MCF 10A (cell line): ENCODE measurements at regions of chr15 and their contacts with region 1.

Region 1: GRCh38 chr15:58770857-58771620 is at the start of gene MINDY2:
- DNase-seq: peak; percentile 98
- H3K4me3 Mint-ChIP-seq: no peak within 1 kb of the TSS
- H3K27ac Mint-ChIP-seq: peak within 1 kb of the TSS; percentile 97
- H3K4me1 Mint-ChIP-seq: peaks cover 11% of the 10 kb centered on the region
- H3K27me3 Mint-ChIP-seq: no peaks in the 10 kb centered on the region
- CTCF ChIP-seq: peak; percentile 28
- total RNA-seq, gene MINDY2: 18.8 and 21.9 TPM in 2 replicates

Region 2: DNA sequence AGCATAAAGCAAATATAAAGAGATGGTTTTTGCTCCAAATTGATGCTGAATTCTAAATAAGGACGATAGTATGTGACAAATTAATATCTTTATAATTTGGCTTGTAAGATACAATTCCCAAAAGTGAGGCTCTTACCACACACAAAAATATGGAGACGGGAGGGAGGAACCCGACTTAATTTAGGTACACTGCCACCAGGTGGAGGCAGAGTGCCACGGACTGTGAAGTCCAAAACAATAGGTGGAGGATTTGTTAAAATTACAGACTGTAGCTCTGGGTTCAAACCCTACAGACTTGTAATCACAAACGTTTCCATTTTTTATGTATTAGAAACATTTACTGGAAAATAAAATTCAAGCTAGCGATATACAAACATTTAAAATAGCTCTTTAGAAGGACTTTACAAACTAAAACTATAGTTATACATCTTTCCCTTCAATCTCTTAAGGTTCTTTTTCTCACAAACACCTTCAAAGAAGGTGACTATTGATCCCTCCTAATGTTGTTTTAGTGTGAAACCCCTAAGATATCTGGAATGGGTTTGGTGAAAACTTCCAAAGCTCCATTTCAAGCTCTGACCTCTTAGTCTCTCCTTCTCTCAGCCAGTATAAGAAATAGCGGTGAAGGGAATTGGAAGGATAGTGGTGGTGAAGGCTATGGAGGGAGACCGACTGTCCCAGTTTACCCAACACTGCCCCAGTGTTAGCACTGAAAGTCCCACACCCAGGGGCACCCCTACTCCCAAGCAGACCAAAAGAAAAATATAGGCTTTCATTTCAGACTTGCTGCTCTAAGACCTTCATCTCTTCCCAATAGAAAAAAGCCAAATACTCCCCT is 543.1 kb before region 1 on chr15:
- CTCF ChIA-PET with region 1: interaction called, 16 read pairs
- POLR2A ChIA-PET with region 1: interaction called, 8 read pairs
- intact Hi-C with region 1: loop called (anchors 5 kb)
- DNase-seq: peak; percentile 85
- H3K4me3 Mint-ChIP-seq: no peak overlapping the region
- H3K27ac Mint-ChIP-seq: no peak overlapping the region
- H3K4me1 Mint-ChIP-seq: peaks cover 6% of the 10 kb centered on the region
- H3K27me3 Mint-ChIP-seq: no peaks in the 10 kb centered on the region
- CTCF ChIP-seq: peak; percentile 92

Region 3: GRCh38 chr15:58484791-58485600 is 286.0 kb before region 1 on chr15:
- CTCF ChIA-PET with region 1: no interaction called
- POLR2A ChIA-PET with region 1: no interaction called
- intact Hi-C with region 1: no loop called
- DNase-seq: no peak
- H3K4me3 Mint-ChIP-seq: no peak overlapping the region
- H3K27ac Mint-ChIP-seq: no peak overlapping the region
- H3K4me1 Mint-ChIP-seq: no peaks in the 10 kb centered on the region
- H3K27me3 Mint-ChIP-seq: no peaks in the 10 kb centered on the region
- CTCF ChIP-seq: no peak

Region 4: DNA sequence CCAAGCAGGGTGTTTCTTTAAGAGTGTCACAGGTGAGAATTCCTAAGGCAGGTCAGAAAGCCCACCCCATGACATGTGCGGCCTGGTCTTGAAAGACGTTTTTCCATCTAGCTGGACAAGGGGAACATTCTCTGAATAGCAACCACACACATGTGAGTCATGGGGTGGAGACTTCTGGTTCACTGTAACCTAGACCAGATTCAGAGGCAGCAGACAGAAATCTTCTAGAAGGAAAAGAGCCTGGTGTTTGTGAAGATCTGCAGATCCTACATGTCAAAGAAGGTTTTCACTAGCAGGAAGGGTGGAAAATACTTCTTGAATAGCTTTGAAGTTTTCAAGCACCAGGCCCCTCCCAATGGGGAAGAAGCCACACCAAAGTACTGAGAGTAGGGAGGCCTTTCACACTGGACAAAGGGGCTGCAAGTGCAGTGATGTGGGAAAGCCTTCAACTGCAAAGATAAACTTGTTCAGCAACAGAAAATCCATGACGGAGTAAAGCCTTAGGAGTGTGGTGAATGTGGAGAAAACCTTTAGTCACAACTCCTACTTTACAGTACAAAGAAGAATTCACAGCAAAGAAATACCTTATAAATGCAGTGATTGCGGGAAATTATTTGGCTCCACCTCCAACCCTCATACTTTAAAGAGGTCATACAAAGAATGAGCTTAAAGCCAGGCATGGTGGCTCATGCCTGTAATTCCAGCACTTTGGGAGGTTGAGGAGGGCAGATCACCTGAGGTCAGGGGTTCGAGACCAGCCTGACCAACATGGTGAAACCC is 39.1 kb before region 1 on chr15:
- CTCF ChIA-PET with region 1: no interaction called
- POLR2A ChIA-PET with region 1: interaction called, 21 read pairs
- intact Hi-C with region 1: no loop called
- DNase-seq: peak; percentile 64
- H3K4me3 Mint-ChIP-seq: peak overlapping the region; percentile 37
- H3K27ac Mint-ChIP-seq: peak overlapping the region; percentile 83
- H3K4me1 Mint-ChIP-seq: peaks cover 40% of the 10 kb centered on the region
- H3K27me3 Mint-ChIP-seq: no peaks in the 10 kb centered on the region
- CTCF ChIP-seq: no peak

Region 5: DNA sequence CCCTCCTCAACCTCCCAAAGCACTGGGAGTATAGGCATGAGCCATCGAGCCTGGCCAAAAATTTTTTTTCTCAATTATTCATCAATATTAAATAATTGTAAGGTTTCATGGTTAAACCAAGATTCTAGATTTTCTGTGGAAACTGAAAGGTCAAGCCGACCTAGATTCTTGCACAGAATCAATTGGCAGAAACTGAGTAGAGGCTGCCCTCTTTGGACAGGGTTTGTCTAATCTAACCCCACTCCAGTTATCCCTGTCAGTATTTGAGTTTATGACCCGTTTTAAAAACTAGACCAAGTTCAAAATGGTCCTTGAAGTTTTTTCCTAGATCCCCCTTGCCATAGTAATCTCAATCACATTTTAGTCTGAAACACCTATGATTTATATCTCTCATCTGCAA is 12.9 kb before region 1 on chr15:
- CTCF ChIA-PET with region 1: interaction called, 5 read pairs
- POLR2A ChIA-PET with region 1: interaction called, 368 read pairs
- intact Hi-C with region 1: no loop called
- DNase-seq: no peak
- H3K4me3 Mint-ChIP-seq: no peak overlapping the region
- H3K27ac Mint-ChIP-seq: no peak overlapping the region
- H3K4me1 Mint-ChIP-seq: no peaks in the 10 kb centered on the region
- H3K27me3 Mint-ChIP-seq: no peaks in the 10 kb centered on the region
- CTCF ChIP-seq: no peak

Region 6: GRCh38 chr15:58864602-58865424 is 93.8 kb after region 1 on chr15:
- CTCF ChIA-PET with region 1: interaction called, 3 read pairs
- POLR2A ChIA-PET with region 1: no interaction called
- intact Hi-C with region 1: loop called (anchors 10 kb)
- DNase-seq: no peak
- H3K4me3 Mint-ChIP-seq: no peak overlapping the region
- H3K27ac Mint-ChIP-seq: peak overlapping the region; percentile 73
- H3K4me1 Mint-ChIP-seq: peaks cover 6% of the 10 kb centered on the region
- H3K27me3 Mint-ChIP-seq: no peaks in the 10 kb centered on the region
- CTCF ChIP-seq: no peak

Region 7: GRCh38 chr15:58987489-58988005 is 216.5 kb after region 1 on chr15 and contains the start of gene RNF111:
- CTCF ChIA-PET with region 1: interaction called, 3 read pairs
- POLR2A ChIA-PET with region 1: interaction called, 11 read pairs
- intact Hi-C with region 1: no loop called
- DNase-seq: peak; percentile 96
- H3K4me3 Mint-ChIP-seq: peak within 1 kb of the TSS; percentile 83
- H3K27ac Mint-ChIP-seq: peak within 1 kb of the TSS; percentile 81
- H3K4me1 Mint-ChIP-seq: peaks cover 11% of the 10 kb centered on the region
- H3K27me3 Mint-ChIP-seq: peaks cover 18% of the 10 kb centered on the region
- CTCF ChIP-seq: no peak
- total RNA-seq, gene RNF111: 29.2 and 32.8 TPM in 2 replicates